Heart right ventricle (tissue), 16 donors: ENCODE measurements at regions of chr16 and their contacts with region 1.

Region 1: GRCh38 chr16:74431516-74431915 is 10.2 kb upstream of the CLEC18B start:
- DNase-seq: no peak
- ATAC-seq: no peak
- H3K4me3 ChIP-seq: no peak overlapping the region
- H3K27ac ChIP-seq: no peak overlapping the region
- H3K4me1 ChIP-seq: no peaks in the 10 kb centered on the region
- H3K27me3 ChIP-seq: no peaks in the 10 kb centered on the region
- CTCF ChIP-seq: no peak

Region 2: DNA sequence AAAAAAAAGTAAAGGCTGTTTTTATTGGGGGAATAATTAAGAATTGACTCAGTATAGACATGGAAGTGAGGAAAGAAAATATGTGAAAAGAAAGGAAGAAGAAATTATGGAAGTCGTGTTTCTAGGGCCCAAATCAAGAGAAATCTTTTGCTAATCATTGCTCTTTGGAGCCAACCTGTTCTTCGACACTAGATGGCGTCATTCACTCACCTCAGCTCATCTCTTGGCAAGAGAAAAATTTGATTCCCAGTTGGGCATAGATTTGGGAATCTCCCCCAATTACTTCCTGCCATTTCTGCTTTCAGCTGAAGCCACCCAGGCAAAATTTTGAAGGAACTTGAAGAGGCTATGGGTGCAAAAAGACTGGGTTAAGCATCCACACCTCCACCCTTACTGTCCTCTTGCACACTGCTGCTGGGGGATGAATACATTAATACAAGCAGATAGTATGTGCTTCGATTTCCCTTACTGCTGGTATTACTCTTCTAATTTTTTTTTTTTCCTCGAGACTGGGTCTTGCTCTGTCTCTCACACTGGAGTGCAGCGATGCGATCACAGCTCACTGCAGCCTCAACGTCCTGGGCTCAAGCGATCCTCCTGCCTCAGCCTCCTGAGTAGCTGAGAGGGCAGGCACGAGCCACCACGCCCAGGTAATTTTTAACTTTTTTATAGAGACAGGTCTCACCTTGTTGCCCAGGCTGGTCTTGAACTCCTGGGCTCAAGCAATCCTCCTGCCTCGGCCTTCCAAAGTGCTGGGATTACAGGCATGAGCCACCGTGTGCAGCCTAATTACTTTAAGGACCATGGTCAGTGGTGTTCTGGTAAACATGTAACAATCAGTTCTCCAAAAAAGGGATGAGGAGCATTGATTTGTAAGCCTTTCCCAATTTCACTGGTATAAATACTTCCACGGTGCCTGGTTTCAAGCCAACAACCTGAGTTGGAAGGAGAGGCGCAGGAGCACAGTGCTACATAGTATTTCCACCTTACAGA is 121.4 kb before region 1 on chr16:
- intact Hi-C with region 1: loop called in 3 of 10 experiments (anchors 5 to 10 kb)
- DNase-seq: no peak
- ATAC-seq: peak in 3 of 8 donors; percentile 39 to 55 (median 43)
- H3K4me3 ChIP-seq: no peak overlapping the region
- H3K27ac ChIP-seq: no peak overlapping the region
- H3K4me1 ChIP-seq: peaks cover 0 to 30% (median 6%) of the 10 kb centered on the region in 9 donors
- H3K27me3 ChIP-seq: no peaks in the 10 kb centered on the region
- CTCF ChIP-seq: peak; percentile 45 to 84 (median 77)